ENCODE measurements at regions of chr1 and their contacts with region 1.

Region 1: DNA sequence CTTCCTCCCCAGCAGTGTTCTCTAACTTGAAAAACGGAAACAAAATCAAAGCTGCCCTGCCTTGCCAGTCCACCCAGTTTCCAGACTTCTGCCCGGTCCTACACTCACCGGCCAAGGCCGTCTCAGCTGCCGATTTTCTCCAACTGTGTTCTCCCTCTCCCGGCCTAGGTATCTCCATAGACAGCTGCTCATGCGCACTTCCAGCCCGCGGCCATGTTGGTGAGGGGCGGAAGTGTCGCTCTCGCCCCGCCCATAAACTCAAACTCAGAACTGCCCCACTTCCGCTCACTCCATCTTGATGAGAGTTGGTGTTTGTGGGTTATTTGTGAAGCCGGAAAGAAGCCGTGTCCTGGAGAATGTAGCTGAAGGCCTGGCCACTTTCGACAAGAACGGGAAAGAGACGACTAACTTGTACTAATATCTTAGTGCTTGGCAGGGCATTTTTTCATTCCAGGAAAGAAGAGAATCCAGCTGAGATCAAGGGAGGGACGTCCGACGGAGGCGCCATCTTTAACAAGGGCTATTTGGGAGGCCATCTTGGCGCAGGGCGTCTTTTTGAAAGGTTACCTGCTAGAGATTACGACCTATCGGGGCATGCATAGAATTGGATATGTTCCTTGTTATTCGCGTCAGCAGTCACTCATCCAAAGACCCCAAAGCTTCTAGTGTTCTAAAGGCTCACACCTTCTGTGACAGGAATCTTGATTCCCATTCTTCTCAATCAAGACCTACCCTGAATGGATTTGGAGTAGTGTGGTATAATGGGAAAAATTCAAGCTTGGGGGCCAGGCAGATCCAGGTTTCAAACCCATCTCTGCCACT is at the start of gene USF1:
- DNase-seq: peak; percentile 99
- H3K4me3 Mint-ChIP-seq: peak within 1 kb of the TSS; percentile 84
- H3K27ac Mint-ChIP-seq: peak within 1 kb of the TSS; percentile 97
- H3K4me1 Mint-ChIP-seq: peaks cover 42% of the 10 kb centered on the region
- H3K27me3 Mint-ChIP-seq: no peaks in the 10 kb centered on the region
- total RNA-seq, gene USF1: 46.5 and 48.6 TPM in 2 replicates

Region 2: DNA sequence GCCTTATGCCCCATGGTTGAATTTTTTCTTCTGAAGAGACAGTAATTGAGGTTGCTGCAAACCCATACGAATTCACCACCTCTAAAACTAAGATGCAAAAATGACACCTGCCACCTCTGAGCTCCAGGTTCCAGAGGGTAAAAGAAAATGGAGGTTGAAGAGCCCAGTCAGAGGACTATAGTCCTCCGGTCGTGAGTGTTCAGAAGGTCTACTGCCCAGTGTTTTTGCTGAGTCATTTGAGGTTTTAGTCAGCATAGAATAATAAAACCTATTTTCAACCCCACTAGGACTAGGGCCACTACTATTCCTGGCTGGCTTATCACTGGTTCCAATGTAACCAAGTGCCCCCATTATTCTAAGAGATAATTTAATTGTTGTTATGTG is 319.9 kb before region 1 on chr1:
- intact Hi-C with region 1: no loop called
- DNase-seq: no peak
- H3K4me3 Mint-ChIP-seq: no peak overlapping the region
- H3K27ac Mint-ChIP-seq: no peak overlapping the region
- H3K4me1 Mint-ChIP-seq: peaks cover 19% of the 10 kb centered on the region
- H3K27me3 Mint-ChIP-seq: no peaks in the 10 kb centered on the region

Region 3: GRCh38 chr1:160997323-160998038 is 48.5 kb before region 1 on chr1:
- intact Hi-C with region 1: loop called (anchors 2 kb)
- DNase-seq: peak; percentile 85
- H3K4me3 Mint-ChIP-seq: no peak overlapping the region
- H3K27ac Mint-ChIP-seq: peak overlapping the region; percentile 34
- H3K4me1 Mint-ChIP-seq: peaks cover 17% of the 10 kb centered on the region
- H3K27me3 Mint-ChIP-seq: no peaks in the 10 kb centered on the region

Region 4: GRCh38 chr1:161092621-161093028 is 46.7 kb after region 1 on chr1:
- intact Hi-C with region 1: loop called (anchors 1 kb)
- DNase-seq: peak; percentile 76
- H3K4me3 Mint-ChIP-seq: peak overlapping the region; percentile 50
- H3K27ac Mint-ChIP-seq: peak overlapping the region; percentile 85
- H3K4me1 Mint-ChIP-seq: peaks cover 66% of the 10 kb centered on the region
- H3K27me3 Mint-ChIP-seq: peaks cover 2% of the 10 kb centered on the region

Region 5: GRCh38 chr1:161117759-161118581 is 72.0 kb after region 1 on chr1 and contains the starts of genes NIT1 and PFDN2:
- intact Hi-C with region 1: loop called (anchors 1 kb)
- DNase-seq: peak; percentile 97
- H3K4me3 Mint-ChIP-seq: peak within 1 kb of the TSS; percentile 98
- H3K27ac Mint-ChIP-seq: peak within 1 kb of the TSS; percentile 92
- H3K4me1 Mint-ChIP-seq: peaks cover 61% of the 10 kb centered on the region
- H3K27me3 Mint-ChIP-seq: no peaks in the 10 kb centered on the region
- total RNA-seq, gene NIT1: 46.7 and 48.2 TPM in 2 replicates
- total RNA-seq, gene PFDN2: 173 and 178 TPM in 2 replicates

Region 6: DNA sequence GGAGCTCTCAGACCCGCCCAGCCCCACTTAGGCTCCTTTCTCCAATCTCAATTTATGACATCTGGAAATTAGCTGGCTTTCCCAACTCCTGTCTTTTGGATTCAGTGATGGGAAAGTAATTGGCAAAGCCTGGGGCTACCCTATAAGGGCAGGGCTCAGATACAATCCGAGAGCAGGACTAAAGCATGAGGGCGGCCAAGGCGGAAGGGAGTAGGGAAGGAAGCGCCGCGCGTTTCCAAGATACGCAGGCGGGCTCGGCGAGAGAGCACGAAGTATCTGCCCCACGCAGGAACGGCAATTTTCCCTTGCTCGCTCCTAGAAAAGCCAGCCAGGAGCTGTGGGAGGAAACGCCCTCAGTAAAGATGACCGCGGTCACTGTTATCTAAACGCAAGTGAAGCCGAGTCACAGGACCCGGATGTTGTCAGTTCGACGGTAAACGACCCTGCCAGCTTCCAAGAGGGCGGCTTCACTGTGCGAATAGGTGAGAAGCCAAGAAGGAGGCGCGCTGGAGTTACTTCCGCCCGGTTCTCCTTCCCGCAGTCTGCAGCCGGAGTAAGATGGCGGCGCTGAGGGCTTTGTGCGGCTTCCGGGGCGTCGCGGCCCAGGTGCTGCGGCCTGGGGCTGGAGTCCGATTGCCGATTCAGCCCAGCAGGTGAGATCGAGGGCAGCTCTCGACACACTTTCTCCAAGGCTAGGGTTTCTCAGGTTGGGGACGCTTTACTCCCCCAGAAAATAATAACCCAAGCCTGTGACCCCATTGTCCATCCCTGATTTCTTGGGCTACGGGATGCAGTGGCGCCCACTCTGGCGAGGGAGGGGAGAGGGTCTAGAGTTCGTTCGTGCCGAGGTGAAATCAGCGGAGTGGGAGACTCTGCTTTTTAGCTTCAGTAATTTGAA is 156.1 kb after region 1 on chr1 and contains the start of gene NDUFS2:
- intact Hi-C with region 1: loop called (anchors 1 kb)
- DNase-seq: peak; percentile 98
- H3K4me3 Mint-ChIP-seq: peak within 1 kb of the TSS; percentile 94
- H3K27ac Mint-ChIP-seq: peak within 1 kb of the TSS; percentile 96
- H3K4me1 Mint-ChIP-seq: peaks cover 61% of the 10 kb centered on the region
- H3K27me3 Mint-ChIP-seq: no peaks in the 10 kb centered on the region
- total RNA-seq, gene NDUFS2: 88.4 and 89.6 TPM in 2 replicates

Region 7: DNA sequence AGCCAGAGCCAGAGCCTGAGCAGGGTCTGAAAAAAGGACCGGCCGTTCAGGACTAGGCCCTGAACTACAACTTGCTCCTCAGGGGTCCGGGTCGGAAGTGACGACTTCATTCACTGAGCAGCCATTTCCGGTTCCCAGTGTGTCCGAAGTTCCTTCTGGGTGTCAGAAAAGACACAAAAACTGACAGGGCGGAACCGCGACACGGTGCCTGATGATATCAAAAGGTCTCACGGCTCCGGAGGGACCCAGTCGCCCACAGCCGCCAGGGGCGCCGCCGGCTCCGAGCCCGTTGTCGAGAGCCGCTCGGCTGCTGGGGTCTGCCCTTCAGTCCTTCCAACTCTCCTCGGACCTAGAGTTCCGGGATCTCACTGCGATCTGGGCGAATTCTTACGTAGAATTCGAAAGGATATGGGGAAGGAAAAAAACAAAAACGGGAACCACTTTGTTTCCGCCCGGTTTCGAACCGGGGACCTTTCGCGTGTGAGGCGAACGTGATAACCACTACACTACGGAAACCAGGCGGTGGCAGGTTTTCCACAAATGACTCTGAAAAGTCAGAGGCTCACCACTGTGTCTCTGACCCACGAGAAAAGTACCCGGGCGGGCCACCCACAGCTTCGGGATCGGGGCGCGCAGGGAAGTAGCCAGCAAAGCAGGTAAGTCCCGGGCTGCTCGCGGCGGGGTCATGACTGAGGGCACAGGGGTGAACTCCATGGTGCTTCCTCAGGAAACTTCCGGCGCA is 353.5 kb after region 1 on chr1:
- intact Hi-C with region 1: loop called (anchors 10 kb)
- DNase-seq: peak; percentile 98
- H3K4me3 Mint-ChIP-seq: peak overlapping the region; percentile 93
- H3K27ac Mint-ChIP-seq: peak overlapping the region; percentile 100
- H3K4me1 Mint-ChIP-seq: peaks cover 28% of the 10 kb centered on the region
- H3K27me3 Mint-ChIP-seq: peaks cover 3% of the 10 kb centered on the region

Measured in activated CD4-positive, alpha-beta T cell treated with anti-CD3 and anti-CD28 coated beads, Interleukin-2, amount 10 ng/mL, durations not matched to agents 24 days and 14 days (primary cell).